Activated CD4-positive, alpha-beta memory T cell treated with anti-CD3 and anti-CD28 coated beads, Interleukin-2, amount 10 ng/mL, durations not matched to agents 7 days and 5 days (primary cell): ENCODE measurements at regions of chr9 and their contacts with region 1.

Region 1: DNA sequence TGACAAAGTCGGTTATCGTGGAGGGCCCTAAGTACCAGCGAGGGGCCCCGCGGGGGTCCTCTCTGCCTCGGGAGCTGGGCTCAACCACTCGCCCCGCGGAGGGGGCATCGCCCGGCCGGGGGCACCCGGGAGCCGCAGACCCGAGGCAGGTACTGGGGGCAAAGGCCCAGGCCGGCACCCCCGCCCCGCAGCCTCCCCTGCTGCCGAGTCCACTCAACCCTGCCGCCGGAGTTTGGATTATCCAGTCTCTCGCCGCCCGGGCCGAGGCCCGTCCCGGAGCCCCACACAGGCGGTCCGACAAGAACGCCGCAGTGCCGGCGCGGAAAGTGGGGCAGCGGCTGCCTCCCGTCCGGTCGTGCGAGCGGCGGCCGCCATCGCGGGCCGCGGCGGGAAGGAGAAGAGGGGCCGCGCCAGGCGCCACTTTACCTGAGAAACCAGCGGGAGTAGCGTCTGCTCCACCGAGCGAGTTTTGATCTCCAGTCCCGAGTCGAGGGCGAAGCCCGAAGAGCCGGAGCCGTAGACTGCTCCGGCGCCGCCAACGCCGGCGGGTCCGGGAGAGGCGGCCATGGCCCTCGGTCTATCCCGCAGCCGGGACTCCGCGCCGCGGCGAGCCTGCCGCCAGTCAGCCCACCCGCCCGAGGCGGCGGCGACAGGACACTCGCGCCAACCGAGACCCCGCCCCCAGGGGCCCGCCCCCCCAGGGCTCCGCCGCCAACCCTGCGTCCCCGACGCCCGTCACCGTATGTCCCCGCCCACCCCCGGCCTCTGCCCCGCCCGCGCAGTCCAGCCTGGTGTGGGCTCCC is at the start of gene CTNNAL1:
- DNase-seq: peak; percentile 87
- H3K4me3 Mint-ChIP-seq: peak within 1 kb of the TSS; percentile 84
- H3K27ac Mint-ChIP-seq: peak within 1 kb of the TSS; percentile 48
- H3K4me1 Mint-ChIP-seq: peaks cover 34% of the 10 kb centered on the region
- H3K27me3 Mint-ChIP-seq: peaks cover 2% of the 10 kb centered on the region
- total RNA-seq, gene CTNNAL1: 13.2 to 13.3 TPM

Region 2: DNA sequence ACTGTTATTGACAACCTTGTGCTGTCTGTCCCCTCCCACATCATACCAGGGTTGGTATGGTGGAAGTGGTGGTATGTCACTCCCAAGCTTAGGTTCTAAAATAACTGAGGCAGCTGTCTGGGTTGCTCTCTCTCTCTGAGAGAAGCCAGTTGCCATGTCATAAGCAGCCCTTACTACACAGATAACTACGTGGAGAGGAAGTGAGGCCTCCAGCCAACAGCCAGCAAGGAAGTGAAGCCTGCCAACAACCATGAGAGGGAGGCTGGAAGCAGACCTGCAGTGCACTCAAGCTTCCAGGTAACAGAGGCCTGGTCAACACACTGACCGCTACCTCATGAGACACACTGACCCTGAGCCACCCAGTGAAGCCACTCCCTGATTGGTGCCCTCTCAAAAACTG is 18.4 kb before region 1 on chr9:
- CTCF ChIA-PET with region 1: no interaction called
- POLR2A ChIA-PET with region 1: interaction called, 10 read pairs
- DNase-seq: peak; percentile 24
- H3K4me3 Mint-ChIP-seq: no peak overlapping the region
- H3K27ac Mint-ChIP-seq: peak overlapping the region; percentile 4
- H3K4me1 Mint-ChIP-seq: peaks cover 9% of the 10 kb centered on the region
- H3K27me3 Mint-ChIP-seq: no peaks in the 10 kb centered on the region